ENCODE measurements at regions of chr15 and their contacts with region 1.

Region 1: DNA sequence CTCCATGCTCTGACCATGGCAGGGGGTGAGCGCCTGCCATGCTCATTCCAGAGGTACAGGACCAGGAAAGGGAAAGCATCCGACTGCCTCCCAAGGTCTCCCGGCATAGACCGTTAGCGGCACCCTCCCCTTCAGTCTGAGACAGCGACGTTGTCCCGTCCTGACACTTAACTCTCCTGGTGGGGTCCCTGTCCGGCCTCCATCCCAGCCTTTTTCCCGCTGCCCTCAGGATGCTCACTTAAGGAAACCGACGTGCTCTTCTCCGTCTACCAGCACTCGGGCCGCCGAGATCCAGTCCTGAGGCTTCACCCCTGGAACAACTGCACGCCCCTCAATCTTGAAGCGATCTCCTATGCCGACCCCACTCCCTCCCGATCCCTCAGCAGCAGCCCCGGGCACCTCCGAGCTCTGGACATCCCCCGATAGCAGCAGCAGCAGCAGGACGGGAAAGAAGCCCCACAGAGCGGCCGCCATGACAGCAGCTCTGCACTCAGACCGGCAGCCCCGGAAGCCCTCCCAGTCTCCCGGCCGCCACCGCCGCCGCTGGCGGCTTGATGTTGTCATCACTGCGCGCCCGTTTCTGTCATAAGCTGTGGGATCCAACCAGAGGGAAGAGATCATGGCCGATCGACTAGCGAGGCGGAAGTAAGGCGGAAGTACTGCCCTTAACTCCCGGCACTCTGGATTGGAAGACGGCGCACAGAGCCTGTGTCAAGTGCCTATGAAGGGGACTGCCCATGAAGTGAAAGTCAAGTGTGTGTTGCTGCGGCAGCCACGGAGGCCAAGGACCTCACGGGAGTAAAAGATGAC is at the starts of genes EMC7 and PGBD4:
- DNase-seq: peak; percentile 99
- H3K4me3 ChIP-seq: peak within 1 kb of the TSS; percentile 96 to 99 (median 96)
- H3K27ac ChIP-seq: peak within 1 kb of the TSS; percentile 74
- H3K4me1 ChIP-seq: peaks cover 14% of the 10 kb centered on the region
- H3K27me3 ChIP-seq: no peaks in the 10 kb centered on the region
- CTCF ChIP-seq: no peak
- total RNA-seq, gene EMC7: 28.3 to 75.8 TPM
- total RNA-seq, gene PGBD4: 1.3 to 2.1 TPM

Region 2: DNA sequence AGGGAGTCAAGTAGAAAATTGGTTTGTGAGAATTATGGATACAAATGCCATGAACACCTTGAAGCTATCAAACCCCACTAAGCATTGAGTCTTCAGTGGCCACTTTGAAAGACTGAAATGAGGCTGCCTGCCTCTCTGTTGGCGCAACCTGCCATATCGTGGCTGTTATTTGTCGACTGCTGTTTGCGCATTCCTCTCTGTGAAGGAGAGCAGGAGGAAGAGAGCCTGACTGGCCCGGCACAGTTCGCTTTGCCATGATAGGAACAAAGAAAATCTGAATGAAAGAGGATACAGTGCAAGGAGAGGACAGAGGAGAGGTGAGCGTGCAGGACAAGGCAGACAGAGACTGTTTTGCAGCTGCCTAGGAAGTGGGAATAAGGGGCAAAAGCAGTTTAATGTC is 501.4 kb before region 1 on chr15:
- CTCF ChIA-PET with region 1: no interaction called
- dilution Hi-C with region 1: no loop called
- in situ Hi-C with region 1: no loop called
- intact Hi-C with region 1: no loop called
- DNase-seq: no peak
- H3K4me3 ChIP-seq: no peak overlapping the region
- H3K27ac ChIP-seq: no peak overlapping the region
- H3K4me1 ChIP-seq: no peaks in the 10 kb centered on the region
- H3K27me3 ChIP-seq: no peaks in the 10 kb centered on the region
- CTCF ChIP-seq: no peak

Region 3: DNA sequence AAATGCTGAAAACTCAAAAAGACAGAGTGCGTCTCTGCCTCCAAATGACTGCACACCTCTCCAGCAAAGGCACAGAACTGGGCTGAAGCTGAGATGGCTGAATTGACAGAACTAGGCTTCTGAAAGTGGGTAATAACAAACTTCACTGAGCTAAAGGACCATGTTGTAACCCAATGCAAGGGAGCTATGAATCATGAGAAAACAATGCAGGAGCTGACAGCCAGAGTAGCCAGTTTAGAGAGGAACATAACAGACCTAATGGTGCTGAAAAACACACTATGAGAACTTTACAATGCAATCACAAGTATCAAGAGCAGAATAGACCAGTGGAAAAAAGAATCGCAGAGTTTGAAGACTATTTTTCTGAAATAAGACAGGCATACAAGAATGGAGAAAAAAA is 52.5 kb before region 1 on chr15:
- CTCF ChIA-PET with region 1: no interaction called
- dilution Hi-C with region 1: no loop called
- in situ Hi-C with region 1: loop called in 1 of 2 experiments (anchors 10 kb)
- intact Hi-C with region 1: no loop called
- DNase-seq: peak; percentile 50
- H3K4me3 ChIP-seq: no peak overlapping the region
- H3K27ac ChIP-seq: no peak overlapping the region
- H3K4me1 ChIP-seq: peaks cover 15% of the 10 kb centered on the region
- H3K27me3 ChIP-seq: no peaks in the 10 kb centered on the region
- CTCF ChIP-seq: no peak

Region 4: GRCh38 chr15:34065941-34066340 is 35.6 kb before region 1 on chr15:
- CTCF ChIA-PET with region 1: no interaction called
- dilution Hi-C with region 1: no loop called
- in situ Hi-C with region 1: no loop called
- intact Hi-C with region 1: loop called (anchors 5 kb)
- DNase-seq: peak; percentile 90
- H3K4me3 ChIP-seq: no peak overlapping the region
- H3K27ac ChIP-seq: no peak overlapping the region
- H3K4me1 ChIP-seq: peaks cover 13% of the 10 kb centered on the region
- H3K27me3 ChIP-seq: no peaks in the 10 kb centered on the region
- CTCF ChIP-seq: no peak

Region 5: DNA sequence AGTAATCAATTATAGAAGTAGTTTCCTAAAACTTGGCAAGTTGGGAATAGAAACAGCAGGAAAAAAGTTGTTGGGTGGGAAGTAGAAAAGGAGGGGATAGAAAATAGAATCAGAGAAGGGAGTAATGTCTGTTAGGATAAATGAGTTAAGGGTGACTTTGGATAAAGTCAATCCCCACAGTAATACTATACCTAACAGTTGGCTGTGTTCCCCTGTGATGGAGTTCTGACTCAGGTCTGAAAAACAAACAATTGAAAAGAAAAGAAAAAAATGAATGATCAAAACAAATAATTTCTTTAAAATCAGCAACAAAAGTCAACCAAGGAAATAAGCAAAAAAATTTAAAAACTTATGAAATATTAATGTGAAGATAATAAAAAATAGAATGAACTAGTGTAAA is 173.6 kb after region 1 on chr15:
- CTCF ChIA-PET with region 1: no interaction called
- dilution Hi-C with region 1: no loop called
- in situ Hi-C with region 1: no loop called
- intact Hi-C with region 1: no loop called
- DNase-seq: peak; percentile 24
- H3K4me3 ChIP-seq: no peak overlapping the region
- H3K27ac ChIP-seq: no peak overlapping the region
- H3K4me1 ChIP-seq: peaks cover 3% of the 10 kb centered on the region
- H3K27me3 ChIP-seq: no peaks in the 10 kb centered on the region
- CTCF ChIP-seq: no peak